Activated naive CD4-positive, alpha-beta T cell treated with anti-CD3 and anti-CD28 coated beads for 36 hours (primary cell): ENCODE measurements at regions of chr11 and their contacts with region 1.

Region 1: DNA sequence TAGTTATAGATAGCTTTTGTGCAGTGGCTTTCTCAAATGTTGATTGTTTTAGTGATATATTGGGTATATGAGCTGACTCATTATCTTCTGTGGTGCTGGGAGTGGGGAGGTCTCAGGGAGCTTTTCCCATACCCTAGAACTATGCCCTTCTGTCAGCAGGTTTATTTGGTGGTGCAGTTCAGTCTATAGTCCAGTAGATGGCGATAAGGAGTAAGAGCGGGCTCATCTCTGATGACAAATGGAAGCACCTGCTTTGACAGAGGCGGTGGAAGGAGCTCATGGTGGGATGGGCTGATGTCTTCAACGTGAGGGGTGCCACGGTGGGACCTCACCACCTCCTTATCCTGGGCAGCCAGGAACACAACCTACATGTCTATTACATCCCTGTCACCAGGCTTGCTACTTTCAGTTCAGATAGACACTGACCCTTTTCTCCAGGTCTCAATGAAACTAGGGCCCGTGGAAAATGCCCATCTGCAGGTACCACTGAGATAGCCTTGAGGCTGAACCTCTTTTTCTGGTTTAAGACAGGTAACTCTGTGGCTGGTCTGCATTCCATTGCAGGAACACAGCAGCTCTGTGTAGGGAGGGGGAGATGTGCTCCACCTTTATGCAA is 13.0 kb upstream of the OR6A2 start:
- DNase-seq: peak; percentile 45
- H3K4me3 Mint-ChIP-seq: no peak overlapping the region
- H3K27ac Mint-ChIP-seq: no peak overlapping the region
- H3K4me1 Mint-ChIP-seq: no peaks in the 10 kb centered on the region
- H3K27me3 Mint-ChIP-seq: peaks cover 15% of the 10 kb centered on the region

Region 2: DNA sequence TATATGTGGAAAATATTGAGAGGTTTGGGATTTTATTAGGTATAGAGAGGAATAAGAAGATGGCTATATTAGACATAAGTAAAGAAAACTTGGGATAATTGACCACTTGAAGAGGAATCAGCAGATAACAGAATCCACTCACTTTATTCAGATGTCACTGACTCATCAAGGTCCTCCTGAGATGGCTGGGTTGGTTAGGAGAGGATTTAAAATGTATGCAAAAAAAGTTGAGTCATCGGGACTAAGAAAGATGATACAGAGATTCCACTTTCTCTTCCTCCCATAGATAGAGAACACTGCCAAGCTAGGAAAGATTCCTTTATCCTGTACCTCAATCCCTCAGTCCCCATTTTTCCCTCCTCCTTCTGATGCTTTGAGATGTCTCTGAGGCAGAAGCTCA is 13.1 kb before region 1 on chr11 and contains the start of gene OR6A2:
- CTCF ChIA-PET with region 1: interaction called, 12 read pairs
- intact Hi-C with region 1: no loop called
- DNase-seq: no peak
- H3K4me3 Mint-ChIP-seq: no peak within 1 kb of the TSS
- H3K27ac Mint-ChIP-seq: no peak within 1 kb of the TSS
- H3K4me1 Mint-ChIP-seq: no peaks in the 10 kb centered on the region
- H3K27me3 Mint-ChIP-seq: peaks cover 2% of the 10 kb centered on the region
- total RNA-seq, gene OR6A2: 0.05 TPM in 1 of 2 experiments, not detected in the other

Region 3: GRCh38 chr11:6926208-6927029 is 113.9 kb after region 1 on chr11 and contains the start of gene ZNF215:
- CTCF ChIA-PET with region 1: interaction called, 4 read pairs
- intact Hi-C with region 1: loop called (anchors 10 kb)
- DNase-seq: peak; percentile 62
- H3K4me3 Mint-ChIP-seq: peak within 1 kb of the TSS; percentile 81
- H3K27ac Mint-ChIP-seq: no peak within 1 kb of the TSS
- H3K4me1 Mint-ChIP-seq: peaks cover 16% of the 10 kb centered on the region
- H3K27me3 Mint-ChIP-seq: peaks cover 32% of the 10 kb centered on the region
- total RNA-seq, gene ZNF215: 0.99 to 1.1 TPM

Region 4: GRCh38 chr11:7077101-7077500 is 264.6 kb after region 1 on chr11:
- CTCF ChIA-PET with region 1: no interaction called
- intact Hi-C with region 1: no loop called
- DNase-seq: no peak
- H3K4me3 Mint-ChIP-seq: no peak overlapping the region
- H3K27ac Mint-ChIP-seq: no peak overlapping the region
- H3K4me1 Mint-ChIP-seq: no peaks in the 10 kb centered on the region
- H3K27me3 Mint-ChIP-seq: peaks cover 6% of the 10 kb centered on the region

Region 5: DNA sequence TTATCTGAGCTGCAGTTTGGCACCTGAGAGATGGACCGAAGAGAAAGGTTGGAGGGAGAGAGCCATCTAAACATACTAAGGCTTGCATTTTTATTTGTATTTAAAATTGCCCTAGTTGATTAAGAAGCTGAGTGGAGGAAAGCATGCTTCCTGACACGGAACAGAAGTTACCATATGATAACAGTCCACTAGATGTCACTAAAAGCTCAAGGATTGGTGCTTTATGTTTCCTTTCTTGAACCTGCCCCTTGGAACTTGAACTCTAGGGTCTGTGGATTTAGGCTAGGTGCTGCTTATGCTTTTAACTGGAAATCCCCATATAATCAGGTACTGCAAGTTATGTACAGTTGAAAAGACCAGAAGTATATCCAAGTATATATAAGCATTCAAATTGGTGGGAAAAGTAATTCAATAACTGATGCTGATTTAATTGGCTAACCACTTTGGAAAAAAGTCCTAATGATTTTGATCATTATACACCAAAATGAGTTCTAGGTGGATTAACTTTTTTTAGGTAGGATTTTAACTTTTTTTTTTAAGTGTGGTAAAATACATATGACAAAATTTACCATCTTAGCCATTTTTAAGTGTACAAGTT is 285.8 kb after region 1 on chr11:
- CTCF ChIA-PET with region 1: interaction called, 11 read pairs
- intact Hi-C with region 1: loop called (anchors 10 kb)
- DNase-seq: no peak
- H3K4me3 Mint-ChIP-seq: no peak overlapping the region
- H3K27ac Mint-ChIP-seq: no peak overlapping the region
- H3K4me1 Mint-ChIP-seq: no peaks in the 10 kb centered on the region
- H3K27me3 Mint-ChIP-seq: peaks cover 11% of the 10 kb centered on the region

Region 6: DNA sequence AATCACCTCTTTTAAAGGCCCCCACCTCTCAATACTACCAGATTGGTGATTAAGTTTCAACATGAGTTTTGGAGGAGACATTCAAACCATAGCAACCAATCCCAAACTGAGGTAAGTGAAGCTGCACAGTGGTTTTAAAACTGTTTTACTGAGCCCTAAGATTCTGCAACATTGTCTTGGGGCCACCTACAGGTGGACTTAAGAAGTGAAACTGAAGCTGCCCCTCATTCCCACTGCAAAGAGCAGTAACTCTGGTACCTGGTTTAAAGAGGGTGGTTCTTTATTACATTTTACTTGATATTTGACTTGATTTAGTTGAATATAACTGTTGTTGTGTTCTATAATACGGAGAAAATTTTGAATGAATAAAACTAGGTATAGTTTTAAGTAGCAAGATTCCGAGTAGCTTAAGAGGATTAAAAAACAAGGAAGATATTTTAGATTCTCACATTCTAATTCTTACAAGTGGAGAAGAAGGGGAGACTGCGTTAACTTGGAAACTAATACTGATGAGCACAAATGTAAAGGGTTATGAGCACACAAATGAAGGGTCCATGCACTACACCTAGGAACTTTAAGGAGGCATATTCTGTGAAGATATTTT is 465.9 kb after region 1 on chr11:
- CTCF ChIA-PET with region 1: interaction called, 6 read pairs
- intact Hi-C with region 1: loop called (anchors 10 kb)
- DNase-seq: no peak
- H3K4me3 Mint-ChIP-seq: no peak overlapping the region
- H3K27ac Mint-ChIP-seq: no peak overlapping the region
- H3K4me1 Mint-ChIP-seq: no peaks in the 10 kb centered on the region
- H3K27me3 Mint-ChIP-seq: peaks cover 3% of the 10 kb centered on the region

Region 7: GRCh38 chr11:7696424-7696823 is 883.9 kb after region 1 on chr11:
- CTCF ChIA-PET with region 1: no interaction called
- intact Hi-C with region 1: loop called (anchors 1 kb)
- DNase-seq: no peak
- H3K4me3 Mint-ChIP-seq: no peak overlapping the region
- H3K27ac Mint-ChIP-seq: no peak overlapping the region
- H3K4me1 Mint-ChIP-seq: peaks cover 7% of the 10 kb centered on the region
- H3K27me3 Mint-ChIP-seq: peaks cover 23% of the 10 kb centered on the region